ENCODE measurements at regions of chr4 and their contacts with region 1.

Region 1: DNA sequence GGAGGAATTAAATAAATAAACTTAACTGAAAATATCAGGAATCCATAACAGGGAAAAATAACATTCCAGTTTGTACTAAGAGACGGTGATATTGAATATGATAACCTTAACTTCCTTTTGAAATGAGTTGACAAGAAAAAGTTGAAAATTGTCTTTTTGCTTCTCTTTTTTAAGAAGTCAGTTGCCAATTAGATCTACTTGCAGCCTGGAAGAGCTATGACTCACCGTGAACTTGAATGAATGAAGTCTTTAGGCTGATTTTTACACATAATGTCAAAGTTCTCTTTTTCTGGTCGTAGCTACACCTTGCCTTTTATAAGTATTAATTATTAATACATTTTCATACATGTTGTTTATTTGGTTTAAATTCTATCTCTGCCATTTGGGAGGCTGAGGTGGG is 94.4 kb upstream of the HPGD start:
- DNase-seq: no peak
- H3K4me3 ChIP-seq: no peak overlapping the region
- H3K27ac ChIP-seq: no peak overlapping the region
- H3K4me1 ChIP-seq: no peaks in the 10 kb centered on the region
- H3K27me3 ChIP-seq: no peaks in the 10 kb centered on the region
- CTCF ChIP-seq: no peak

Region 2: DNA sequence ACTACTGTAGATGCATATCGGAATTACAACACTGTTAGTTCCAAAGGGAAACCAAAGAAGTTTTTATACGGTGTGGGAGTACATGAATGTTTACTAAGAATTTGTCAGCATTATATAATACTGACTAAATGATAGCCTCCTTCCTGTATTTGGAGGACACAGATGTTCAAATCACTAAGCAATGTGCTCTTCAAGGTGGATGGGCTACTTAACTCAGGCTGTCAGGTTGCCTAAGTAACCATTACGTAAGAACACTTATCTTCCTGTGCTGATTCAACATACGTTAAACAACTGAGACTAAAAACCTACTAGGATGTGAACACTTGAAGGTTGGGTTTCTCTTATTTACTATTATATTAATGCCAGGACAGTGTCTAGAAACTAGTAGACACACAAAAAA is 12.5 kb before region 1 on chr4:
- CTCF ChIA-PET with region 1: no interaction called
- dilution Hi-C with region 1: no loop called
- in situ Hi-C with region 1: no loop called
- intact Hi-C with region 1: loop called (anchors 1 kb)
- DNase-seq: peak; percentile 50
- H3K4me3 ChIP-seq: no peak overlapping the region
- H3K27ac ChIP-seq: no peak overlapping the region
- H3K4me1 ChIP-seq: no peaks in the 10 kb centered on the region
- H3K27me3 ChIP-seq: no peaks in the 10 kb centered on the region
- CTCF ChIP-seq: no peak